Mucosa of descending colon (tissue), 3 donors: ENCODE measurements at regions of chr7 and their contacts with region 1.

Region 1: GRCh38 chr7:786472-787255 is 45.6 kb upstream of the SUN1 start:
- DNase-seq: peak in 2 of 3 donors; percentile 86
- ATAC-seq: peak; percentile 92
- H3K4me3 ChIP-seq: no peak overlapping the region
- H3K4me1 ChIP-seq: no peaks in the 10 kb centered on the region
- CTCF ChIP-seq: peak; percentile 71

Region 2: DNA sequence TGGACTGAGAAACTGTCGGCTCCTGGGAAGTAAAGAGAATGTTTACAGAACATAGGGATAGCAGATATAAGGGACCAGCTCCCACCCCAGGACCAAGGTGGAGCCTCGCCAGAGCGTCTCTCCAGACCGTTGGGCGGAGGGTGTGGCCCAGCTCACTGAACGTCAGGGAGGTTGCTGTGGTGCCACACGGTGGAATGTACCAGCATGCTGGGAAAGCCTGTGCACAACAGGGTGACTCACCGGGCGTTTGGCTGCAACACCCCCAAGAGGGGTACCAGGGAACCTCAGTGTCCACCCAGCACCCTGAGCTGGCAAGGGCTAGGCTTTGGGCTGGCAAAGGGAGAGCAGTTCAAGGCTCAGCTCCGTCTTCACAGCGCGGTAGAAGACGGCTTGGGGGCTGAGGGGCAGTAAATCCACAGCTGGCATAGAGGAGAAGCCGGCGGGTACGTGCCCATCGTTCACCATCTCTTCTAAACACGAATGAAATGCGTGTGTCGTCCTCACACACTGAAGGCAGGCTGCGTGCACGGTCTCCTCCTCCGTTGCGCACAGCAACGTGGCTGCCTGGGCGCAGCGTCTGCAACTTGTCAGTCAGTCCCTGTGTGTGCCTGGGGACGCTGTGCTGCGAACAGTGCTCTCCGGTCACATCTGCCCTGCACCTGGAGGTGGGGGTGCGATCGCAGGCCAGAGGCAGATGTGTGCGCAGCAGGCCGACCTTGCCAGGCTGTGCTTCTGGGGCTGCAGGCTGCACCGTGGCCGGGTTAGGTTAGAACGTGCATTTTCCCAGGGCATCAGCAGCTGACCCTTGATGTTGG is 81.2 kb after region 1 on chr7:
- intact Hi-C with region 1: loop called (anchors 5 to 10 kb)
- DNase-seq: peak; percentile 85 to 88 (median 88)
- ATAC-seq: peak; percentile 94
- H3K4me3 ChIP-seq: no peak overlapping the region
- H3K4me1 ChIP-seq: peaks cover 14% of the 10 kb centered on the region
- CTCF ChIP-seq: no peak

Region 3: DNA sequence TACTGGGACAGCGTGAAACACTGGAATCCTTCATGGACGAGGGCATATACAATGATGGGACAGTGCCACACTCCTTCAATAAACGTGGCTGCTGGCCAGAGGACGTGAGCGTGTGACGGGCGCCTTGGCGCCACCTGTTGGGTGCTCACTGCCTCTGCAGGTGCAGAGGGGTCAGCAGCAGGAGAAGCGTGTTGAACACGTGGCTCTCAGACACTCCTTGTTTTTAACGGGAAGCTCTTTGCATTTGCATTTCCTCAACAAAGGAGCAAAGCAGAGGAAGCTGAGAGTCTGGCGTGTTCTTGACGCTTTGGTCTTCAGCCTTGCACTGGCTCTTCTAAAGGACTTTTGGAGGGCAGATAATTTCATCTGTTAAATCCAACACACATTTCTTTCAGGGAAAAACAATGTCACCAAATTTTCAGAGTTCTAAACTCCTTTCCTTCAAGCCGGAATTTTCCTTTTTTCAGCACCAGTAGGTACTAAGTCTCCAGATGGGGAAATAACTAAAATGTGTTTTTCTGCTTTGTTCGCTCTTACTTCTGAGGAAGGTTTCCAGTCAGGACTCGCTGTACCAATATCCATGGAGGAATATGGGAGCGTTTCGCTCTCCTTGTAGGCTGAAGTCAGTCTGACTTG is 86.8 kb after region 1 on chr7:
- intact Hi-C with region 1: loop called (anchors 5 to 10 kb)
- DNase-seq: peak; percentile 85 to 91 (median 87)
- ATAC-seq: peak; percentile 73
- H3K4me3 ChIP-seq: no peak overlapping the region
- H3K4me1 ChIP-seq: peaks cover 10% of the 10 kb centered on the region
- CTCF ChIP-seq: peak; percentile 92